ENCODE measurements at regions of chr9 and their contacts with region 1.

Region 1: DNA sequence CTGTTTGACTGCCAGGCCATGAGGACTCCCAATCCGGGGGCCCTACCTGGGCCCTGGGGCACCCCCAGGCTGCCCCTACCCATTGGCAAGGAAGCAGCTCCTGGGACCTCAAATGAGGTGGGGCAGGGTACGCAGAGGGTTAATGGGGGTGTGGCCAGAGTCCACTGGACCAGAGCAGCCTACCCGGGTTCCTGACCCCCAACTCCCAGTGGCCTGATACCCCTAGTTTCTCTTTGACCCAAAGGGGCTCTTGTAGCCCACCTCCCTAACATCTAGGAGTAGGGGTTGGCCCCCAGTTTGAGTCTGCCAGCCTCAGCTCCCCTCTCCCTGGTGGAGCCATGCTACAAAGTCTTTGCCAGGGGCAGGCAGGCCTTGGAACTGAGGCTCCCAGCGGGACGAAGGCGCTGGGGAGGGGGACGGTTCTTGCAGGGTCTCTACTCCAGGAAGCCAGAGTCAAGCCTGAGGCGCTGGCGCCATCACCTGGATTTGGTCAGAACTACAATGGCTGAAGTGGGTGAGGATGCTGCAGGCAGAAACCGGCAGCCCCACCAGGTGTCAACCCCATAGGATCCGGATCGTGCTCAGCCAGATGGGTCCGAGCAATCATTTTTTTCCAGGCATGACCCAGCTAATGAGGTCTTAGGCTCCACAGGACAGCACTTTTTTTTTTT is 8.4 kb upstream of the CERCAM start:
- DNase-seq: peak in 1 of 2 experiments; percentile 65
- H3K4me3 ChIP-seq: no peak overlapping the region
- H3K27ac ChIP-seq: no peak overlapping the region
- H3K4me1 ChIP-seq: peaks cover 15% of the 10 kb centered on the region
- H3K27me3 ChIP-seq: no peaks in the 10 kb centered on the region
- CTCF ChIP-seq: peak; percentile 71

Region 2: GRCh38 chr9:128355451-128355850 is 56.8 kb before region 1 on chr9:
- CTCF ChIA-PET with region 1: no interaction called
- POLR2A ChIA-PET with region 1: interaction called, 14 read pairs
- intact Hi-C with region 1: no loop called
- DNase-seq: no peak
- H3K4me3 ChIP-seq: no peak overlapping the region
- H3K27ac ChIP-seq: no peak overlapping the region
- H3K4me1 ChIP-seq: no peaks in the 10 kb centered on the region
- H3K27me3 ChIP-seq: no peaks in the 10 kb centered on the region
- CTCF ChIP-seq: no peak

Region 3: DNA sequence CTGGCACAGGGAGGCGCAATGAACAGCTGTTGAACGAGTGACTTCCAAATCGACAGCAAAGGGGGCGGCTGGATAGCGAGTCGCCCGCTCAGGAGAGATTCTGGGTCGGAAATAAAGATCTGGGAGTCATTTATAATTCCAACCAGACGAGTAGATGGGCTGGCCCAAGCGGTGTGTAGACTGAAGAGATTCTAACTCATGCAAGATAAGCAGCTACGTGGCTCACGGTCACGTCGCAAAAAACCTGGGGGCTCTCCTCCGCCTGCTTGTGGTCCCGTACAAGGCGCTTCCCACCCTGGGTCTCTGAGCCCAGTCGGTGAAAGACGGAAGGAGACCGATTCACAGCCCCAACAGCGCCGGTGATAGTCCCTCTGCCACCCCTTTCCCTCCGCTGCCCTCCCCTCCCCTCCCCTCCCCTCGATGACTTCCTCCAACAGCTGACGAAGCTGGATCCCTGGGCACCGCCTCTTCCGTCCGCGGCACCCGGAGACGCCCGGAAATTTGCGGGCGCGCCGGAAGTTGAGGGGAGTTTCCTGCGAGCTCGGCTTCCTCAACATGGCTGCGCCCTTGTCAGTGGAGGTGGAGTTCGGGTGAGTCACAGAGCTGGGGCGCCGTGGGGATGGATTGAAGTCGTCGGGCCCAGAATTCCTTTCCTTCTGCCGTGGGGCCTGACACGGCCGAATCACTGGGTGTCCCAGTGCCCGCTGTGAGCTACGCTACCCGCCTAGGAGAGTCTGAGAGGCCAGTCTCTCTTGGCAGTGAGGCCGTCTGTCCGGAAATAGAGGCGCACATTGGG is 41.2 kb before region 1 on chr9 and contains the start of gene URM1:
- CTCF ChIA-PET with region 1: interaction called, 10 read pairs
- POLR2A ChIA-PET with region 1: no interaction called
- intact Hi-C with region 1: no loop called
- DNase-seq: peak; percentile 97
- H3K4me3 ChIP-seq: peak within 1 kb of the TSS; percentile 66
- H3K27ac ChIP-seq: peak within 1 kb of the TSS; percentile 54
- H3K4me1 ChIP-seq: peaks cover 18% of the 10 kb centered on the region; the same call in 1 of the 2 replicates
- H3K27me3 ChIP-seq: no peaks in the 10 kb centered on the region
- CTCF ChIP-seq: no peak
- total RNA-seq, gene URM1: 98.1 and 101 TPM in 2 replicates